Colonic mucosa (tissue), 4 donors: ENCODE measurements at regions of chr5 and their contacts with region 1.

Region 1: GRCh38 chr5:87267574-87268125 is at the start of gene RASA1:
- DNase-seq: peak; percentile 98
- H3K4me3 ChIP-seq: peak within 1 kb of the TSS; percentile 90
- H3K27ac ChIP-seq: peak within 1 kb of the TSS; percentile 97
- H3K4me1 ChIP-seq: peaks cover 6% of the 10 kb centered on the region
- H3K27me3 ChIP-seq: no peaks in the 10 kb centered on the region
- CTCF ChIP-seq: no peak
- total RNA-seq, gene RASA1: 24.1 to 28.8 TPM

Region 2: DNA sequence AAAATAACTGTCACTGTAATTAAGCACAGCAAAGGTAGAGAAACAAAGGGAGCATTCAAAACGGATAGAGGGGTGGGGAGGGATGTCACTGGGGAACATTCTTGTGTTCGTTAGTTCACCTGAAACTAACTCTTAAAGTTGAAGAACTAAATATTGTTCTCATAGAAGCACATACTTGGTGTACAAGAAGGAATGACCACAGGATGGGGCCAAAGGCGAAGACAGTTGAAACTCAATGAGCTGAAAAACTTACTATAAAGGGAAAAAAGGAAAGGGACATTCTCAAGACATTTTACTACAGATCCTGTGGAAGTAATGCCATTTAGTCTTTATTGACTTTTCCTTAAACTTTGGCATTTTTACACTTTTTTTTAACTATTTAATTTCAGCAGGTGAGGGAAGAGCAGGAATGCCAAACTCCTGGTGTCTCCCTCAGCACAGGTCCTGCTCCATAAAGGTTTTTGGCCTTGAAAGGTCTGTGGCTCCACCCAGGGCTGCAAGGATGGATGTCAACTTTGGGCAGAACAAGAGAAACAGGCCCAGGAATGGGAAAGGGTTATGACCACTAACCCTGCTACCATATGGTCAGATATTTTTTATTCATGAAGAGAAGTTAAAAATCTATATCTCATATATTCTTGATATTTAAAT is 197.6 kb before region 1 on chr5:
- intact Hi-C with region 1: loop called (anchors 10 kb)
- DNase-seq: peak; percentile 24
- H3K4me3 ChIP-seq: no peak overlapping the region
- H3K27ac ChIP-seq: no peak overlapping the region
- H3K4me1 ChIP-seq: no peaks in the 10 kb centered on the region
- H3K27me3 ChIP-seq: no peaks in the 10 kb centered on the region
- CTCF ChIP-seq: peak; percentile 24

Region 3: GRCh38 chr5:87164409-87164808 is 103.2 kb before region 1 on chr5:
- intact Hi-C with region 1: no loop called
- DNase-seq: no peak
- H3K4me3 ChIP-seq: no peak overlapping the region
- H3K27ac ChIP-seq: no peak overlapping the region
- H3K4me1 ChIP-seq: no peaks in the 10 kb centered on the region
- H3K27me3 ChIP-seq: no peaks in the 10 kb centered on the region
- CTCF ChIP-seq: no peak

Region 4: GRCh38 chr5:87228285-87228684 is 39.4 kb before region 1 on chr5:
- intact Hi-C with region 1: no loop called
- DNase-seq: no peak
- H3K4me3 ChIP-seq: no peak overlapping the region
- H3K27ac ChIP-seq: no peak overlapping the region
- H3K4me1 ChIP-seq: no peaks in the 10 kb centered on the region
- H3K27me3 ChIP-seq: no peaks in the 10 kb centered on the region
- CTCF ChIP-seq: no peak

Region 5: GRCh38 chr5:87300744-87301143 is 33.1 kb after region 1 on chr5:
- intact Hi-C with region 1: no loop called
- DNase-seq: no peak
- H3K4me3 ChIP-seq: no peak overlapping the region
- H3K27ac ChIP-seq: no peak overlapping the region
- H3K4me1 ChIP-seq: peaks cover 1% of the 10 kb centered on the region
- H3K27me3 ChIP-seq: no peaks in the 10 kb centered on the region
- CTCF ChIP-seq: no peak